GM18951 (cell line): ENCODE measurements at regions of chr6 and their contacts with region 1.

Region 1: GRCh38 chr6:68967549-68968300 is 332.6 kb downstream of the ADGRB3 start:
- POLR2A ChIP-seq: no peak

Region 2: GRCh38 chr6:68317366-68317765 is 650.4 kb before region 1 on chr6:
- in situ Hi-C with region 1: no loop called
- POLR2A ChIP-seq: no peak

Region 3: DNA sequence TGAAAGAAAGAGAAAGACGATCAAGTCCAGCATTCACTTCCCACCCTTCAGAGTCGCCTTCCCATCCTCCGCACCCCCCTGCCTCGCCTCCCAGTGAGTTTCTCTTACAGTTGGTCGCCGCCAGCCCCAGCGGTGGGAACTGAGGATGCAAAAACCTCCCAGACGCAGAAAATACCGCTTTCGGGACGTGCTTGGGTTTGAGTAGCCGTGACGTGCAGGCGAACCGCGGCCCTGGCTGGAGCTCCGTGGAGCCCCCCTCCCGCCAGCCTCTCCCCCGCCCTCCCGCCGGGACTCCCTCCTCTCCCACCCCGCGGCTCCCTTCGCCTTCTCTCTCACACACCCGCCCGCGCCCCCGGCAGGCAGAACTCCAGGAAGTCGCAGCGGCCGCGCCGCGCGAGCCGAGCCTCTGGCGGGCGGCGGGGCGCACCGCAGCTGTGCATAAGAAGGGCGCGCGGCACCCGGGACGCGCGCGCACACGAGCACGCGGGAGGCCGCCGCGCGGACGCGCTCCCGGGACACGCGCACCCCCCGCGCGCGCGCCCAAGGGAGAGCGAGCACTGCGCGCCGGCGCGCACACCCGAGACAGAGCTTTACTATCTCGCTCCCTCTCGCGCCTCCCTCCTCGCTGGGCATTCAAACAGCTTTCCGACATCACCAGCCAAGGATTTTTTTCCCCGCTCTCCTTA is 332.9 kb before region 1 on chr6 and contains the start of gene ADGRB3:
- in situ Hi-C with region 1: loop called (anchors 25 kb)
- POLR2A ChIP-seq: no peak